Dendritic cell treated with granulocyte-macrophage colony-stimulating factor and Interleukin-4, amounts not matched to agents 40 ng/mL and 50 ng/mL, for 4 days (primary cell): ENCODE measurements at regions of chr4 and their contacts with region 1.

Region 1: GRCh38 chr4:174222266-174222872 is 61.1 kb downstream of the FBXO8 start:
- H3K4me3 Mint-ChIP-seq: no peak overlapping the region
- H3K27ac Mint-ChIP-seq: no peak overlapping the region
- H3K4me1 Mint-ChIP-seq: peaks cover 11% of the 10 kb centered on the region
- H3K27me3 Mint-ChIP-seq: peaks cover 56% of the 10 kb centered on the region

Region 2: GRCh38 chr4:173522123-173522950 is 700.0 kb before region 1 on chr4:
- intact Hi-C with region 1: loop called (anchors 5 kb)
- H3K4me3 Mint-ChIP-seq: peak overlapping the region; percentile 70
- H3K27ac Mint-ChIP-seq: no peak overlapping the region
- H3K4me1 Mint-ChIP-seq: peaks cover 17% of the 10 kb centered on the region
- H3K27me3 Mint-ChIP-seq: peaks cover 97% of the 10 kb centered on the region

Region 3: GRCh38 chr4:173909294-173909693 is 313.1 kb before region 1 on chr4:
- intact Hi-C with region 1: loop called (anchors 10 kb)
- H3K4me3 Mint-ChIP-seq: no peak overlapping the region
- H3K27ac Mint-ChIP-seq: peak overlapping the region; percentile 65
- H3K4me1 Mint-ChIP-seq: peaks cover 32% of the 10 kb centered on the region
- H3K27me3 Mint-ChIP-seq: no peaks in the 10 kb centered on the region

Region 4: DNA sequence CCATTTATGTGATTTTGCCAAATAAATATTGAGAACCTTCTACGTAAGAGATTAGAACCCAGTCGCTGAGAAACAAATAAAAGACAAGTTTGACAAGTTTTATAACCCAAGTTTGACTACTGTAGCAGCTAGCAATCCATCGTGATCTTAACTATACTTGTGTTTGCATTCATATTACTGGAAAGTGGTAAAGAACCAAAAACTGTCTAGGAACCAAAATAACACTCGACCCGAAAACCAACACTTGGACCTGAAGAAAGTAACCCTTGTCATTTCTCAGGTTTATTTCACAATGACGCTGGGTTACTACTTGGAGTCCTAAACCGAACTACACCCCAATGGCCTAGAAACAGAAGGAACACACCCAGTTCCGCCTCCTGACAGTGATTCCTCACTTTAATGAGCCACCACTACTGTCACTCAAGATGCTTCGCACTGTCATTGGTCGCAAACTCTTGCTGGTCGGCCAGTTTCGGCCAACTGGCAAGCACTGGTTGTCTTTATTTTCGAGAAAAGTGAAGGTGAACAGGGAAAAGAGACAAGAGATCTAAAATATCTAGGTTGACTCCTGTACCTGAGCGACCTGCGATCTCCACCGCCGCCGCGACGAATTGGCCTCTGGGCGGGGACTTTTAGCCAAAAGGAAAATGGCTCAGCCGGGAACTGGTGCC is 60.6 kb after region 1 on chr4:
- intact Hi-C with region 1: loop called (anchors 2 kb)
- H3K4me3 Mint-ChIP-seq: peak overlapping the region; percentile 93
- H3K27ac Mint-ChIP-seq: peak overlapping the region; percentile 100
- H3K4me1 Mint-ChIP-seq: peaks cover 47% of the 10 kb centered on the region
- H3K27me3 Mint-ChIP-seq: no peaks in the 10 kb centered on the region

Region 5: GRCh38 chr4:174318829-174319764 is 96.7 kb after region 1 on chr4:
- intact Hi-C with region 1: loop called (anchors 1 kb)
- H3K4me3 Mint-ChIP-seq: no peak overlapping the region
- H3K27ac Mint-ChIP-seq: no peak overlapping the region
- H3K4me1 Mint-ChIP-seq: peaks cover 8% of the 10 kb centered on the region
- H3K27me3 Mint-ChIP-seq: no peaks in the 10 kb centered on the region